ENCODE measurements at regions of chr20 and their contacts with region 1.

Region 1: DNA sequence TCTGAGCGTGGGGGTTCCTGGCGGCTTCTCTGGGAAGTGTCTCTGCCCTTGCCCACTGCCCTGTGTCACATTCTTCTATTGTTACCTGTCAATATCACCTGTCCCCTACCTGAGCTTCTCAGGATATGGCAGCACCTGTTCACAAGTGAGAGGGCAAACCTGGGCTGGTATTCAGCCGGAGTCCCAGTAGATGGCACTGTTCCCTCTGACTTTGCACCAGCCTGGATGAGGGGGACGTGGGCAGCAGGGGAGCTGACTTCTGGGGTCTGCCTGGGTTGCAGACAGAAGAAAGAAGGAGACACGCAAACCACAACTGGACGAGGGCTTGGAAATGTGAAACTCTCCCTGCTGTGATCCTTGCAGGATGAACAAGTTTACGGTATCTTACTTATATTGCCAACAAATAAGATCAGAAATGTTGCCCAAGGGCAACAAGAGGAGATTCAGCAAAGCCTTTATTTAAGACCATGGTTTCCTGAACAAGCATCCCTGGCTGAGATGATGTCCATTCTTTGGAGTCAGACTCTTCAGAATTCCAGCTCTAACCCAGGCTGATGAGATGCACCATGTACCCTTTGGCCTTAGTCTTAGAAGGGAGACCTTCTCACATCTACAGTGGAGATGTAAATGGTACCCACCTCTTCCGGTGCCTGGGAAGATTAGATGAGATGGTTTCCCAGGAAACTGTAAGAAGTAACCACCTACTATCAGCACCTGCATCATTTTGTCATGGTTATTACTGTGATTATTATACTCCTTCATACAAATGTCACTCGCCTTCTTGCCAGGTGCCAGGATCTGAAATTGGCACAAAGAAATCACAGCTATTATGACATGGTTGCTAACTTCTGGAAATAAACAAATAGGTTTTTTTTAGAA is 400.0 kb upstream of the CDH4 start:
- DNase-seq: peak; percentile 8
- ATAC-seq: peak; percentile 87
- H3K4me3 ChIP-seq: no peak overlapping the region
- H3K27ac ChIP-seq: no peak overlapping the region
- H3K4me1 ChIP-seq: no peaks in the 10 kb centered on the region
- H3K27me3 ChIP-seq: no peaks in the 10 kb centered on the region
- CTCF ChIP-seq: peak; percentile 77
- EP300 ChIP-seq: no peak
- POLR2A ChIP-seq: no peak
- RAD21 ChIP-seq: peak; percentile 49

Region 2: DNA sequence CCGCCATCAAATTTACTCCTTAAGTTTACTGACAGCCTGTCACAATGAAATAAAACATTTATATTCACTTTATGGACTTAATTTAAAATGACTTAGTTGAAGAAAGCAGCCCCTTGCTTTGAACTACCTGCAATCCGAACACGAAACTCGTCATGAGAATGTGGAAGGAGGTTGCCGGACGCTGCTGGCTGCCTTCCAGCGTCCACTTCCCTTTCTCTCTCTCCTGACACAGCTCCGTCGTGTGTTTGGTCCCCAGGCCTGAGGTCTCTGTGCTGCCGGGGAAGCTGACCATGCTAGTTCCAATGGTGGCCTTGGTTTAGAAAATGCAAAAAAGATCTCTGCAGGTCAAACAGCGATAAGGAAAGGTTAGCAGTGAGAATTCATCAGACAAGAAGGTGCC is 374.1 kb before region 1 on chr20:
- CTCF ChIA-PET with region 1: no interaction called
- POLR2A ChIA-PET with region 1: no interaction called
- in situ Hi-C with region 1: no loop called
- intact Hi-C with region 1: no loop called
- DNase-seq: no peak
- ATAC-seq: no peak
- H3K4me3 ChIP-seq: no peak overlapping the region
- H3K27ac ChIP-seq: no peak overlapping the region
- H3K4me1 ChIP-seq: no peaks in the 10 kb centered on the region
- H3K27me3 ChIP-seq: no peaks in the 10 kb centered on the region; a peak in 2 of 5 replicates
- CTCF ChIP-seq: no peak
- EP300 ChIP-seq: no peak
- POLR2A ChIP-seq: no peak
- RAD21 ChIP-seq: no peak

Region 3: DNA sequence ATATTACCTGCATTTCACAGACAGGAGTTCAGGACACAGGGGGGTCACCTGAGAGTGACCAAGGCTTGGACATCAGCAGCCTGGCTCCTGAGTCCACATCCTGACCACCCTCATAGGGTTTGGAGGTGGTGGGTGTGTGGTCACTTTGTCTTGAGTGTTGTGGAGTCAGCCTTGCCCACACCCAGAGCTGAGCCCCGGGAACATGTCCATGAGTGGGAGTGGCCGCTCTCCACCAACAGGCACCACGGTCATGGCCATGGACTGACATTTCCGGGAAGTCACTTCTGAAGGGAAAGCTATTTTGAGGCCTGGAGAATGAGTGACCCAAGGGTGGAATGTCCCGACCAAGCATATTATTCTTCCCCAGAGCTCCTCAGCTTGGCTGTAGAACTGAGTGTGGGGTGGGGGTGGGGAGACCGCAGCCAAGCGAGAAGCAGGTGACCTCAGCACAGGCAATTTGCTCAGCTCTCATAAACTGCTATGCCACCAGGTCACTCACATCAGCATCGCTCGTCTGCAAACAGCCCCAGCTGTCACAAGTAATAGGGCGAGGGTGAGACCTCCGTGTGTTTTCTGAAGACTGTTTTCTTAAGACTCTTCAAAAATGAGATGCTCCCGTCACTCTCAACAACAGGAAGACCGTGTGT is 51.4 kb after region 1 on chr20:
- CTCF ChIA-PET with region 1: no interaction called
- POLR2A ChIA-PET with region 1: no interaction called
- in situ Hi-C with region 1: no loop called
- intact Hi-C with region 1: no loop called
- DNase-seq: no peak
- ATAC-seq: no peak
- H3K4me3 ChIP-seq: no peak overlapping the region
- H3K27ac ChIP-seq: no peak overlapping the region
- H3K4me1 ChIP-seq: no peaks in the 10 kb centered on the region
- H3K27me3 ChIP-seq: no peaks in the 10 kb centered on the region
- CTCF ChIP-seq: no peak
- EP300 ChIP-seq: no peak
- POLR2A ChIP-seq: no peak
- RAD21 ChIP-seq: no peak

Region 4: GRCh38 chr20:61220160-61220559 is 368.1 kb after region 1 on chr20:
- CTCF ChIA-PET with region 1: no interaction called
- POLR2A ChIA-PET with region 1: no interaction called
- in situ Hi-C with region 1: no loop called
- intact Hi-C with region 1: loop called (anchors 5 kb)
- DNase-seq: no peak
- ATAC-seq: no peak
- H3K4me3 ChIP-seq: no peak overlapping the region
- H3K27ac ChIP-seq: no peak overlapping the region
- H3K4me1 ChIP-seq: no peaks in the 10 kb centered on the region
- H3K27me3 ChIP-seq: peaks cover 0 to 21% of the 10 kb centered on the region in 2 experiments; a peak in 2 of 5 replicates
- CTCF ChIP-seq: no peak
- EP300 ChIP-seq: no peak
- POLR2A ChIP-seq: no peak
- RAD21 ChIP-seq: no peak